Ovary (tissue), 10 donors: ENCODE measurements at regions of chr1 and their contacts with region 1.

Region 1: DNA sequence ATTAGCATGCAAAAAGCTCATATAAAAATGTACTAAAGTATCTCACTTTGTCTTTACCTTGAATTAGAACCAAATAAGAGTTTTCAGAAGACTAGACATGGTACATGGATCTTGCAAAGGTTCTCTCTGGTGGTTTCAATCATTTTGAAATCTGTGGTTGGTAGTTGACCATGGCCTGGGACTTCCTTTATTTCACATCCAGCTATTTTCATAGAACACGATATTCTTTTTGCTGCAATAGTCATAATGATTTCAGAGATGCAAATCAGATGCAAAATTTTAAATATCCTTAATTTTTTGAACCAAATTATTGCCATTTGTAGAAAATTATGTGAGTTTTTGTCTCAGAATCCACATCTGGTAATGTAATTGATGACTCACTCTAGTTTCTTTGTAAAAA is 375.1 kb upstream of the ZP4 start:
- DNase-seq: no peak
- H3K4me3 ChIP-seq: no peak overlapping the region
- H3K27ac ChIP-seq: no peak overlapping the region
- H3K4me1 ChIP-seq: no peaks in the 10 kb centered on the region
- H3K27me3 ChIP-seq: no peaks in the 10 kb centered on the region
- CTCF ChIP-seq: no peak
- EP300 ChIP-seq: no peak
- POLR2A ChIP-seq: no peak

Region 2: DNA sequence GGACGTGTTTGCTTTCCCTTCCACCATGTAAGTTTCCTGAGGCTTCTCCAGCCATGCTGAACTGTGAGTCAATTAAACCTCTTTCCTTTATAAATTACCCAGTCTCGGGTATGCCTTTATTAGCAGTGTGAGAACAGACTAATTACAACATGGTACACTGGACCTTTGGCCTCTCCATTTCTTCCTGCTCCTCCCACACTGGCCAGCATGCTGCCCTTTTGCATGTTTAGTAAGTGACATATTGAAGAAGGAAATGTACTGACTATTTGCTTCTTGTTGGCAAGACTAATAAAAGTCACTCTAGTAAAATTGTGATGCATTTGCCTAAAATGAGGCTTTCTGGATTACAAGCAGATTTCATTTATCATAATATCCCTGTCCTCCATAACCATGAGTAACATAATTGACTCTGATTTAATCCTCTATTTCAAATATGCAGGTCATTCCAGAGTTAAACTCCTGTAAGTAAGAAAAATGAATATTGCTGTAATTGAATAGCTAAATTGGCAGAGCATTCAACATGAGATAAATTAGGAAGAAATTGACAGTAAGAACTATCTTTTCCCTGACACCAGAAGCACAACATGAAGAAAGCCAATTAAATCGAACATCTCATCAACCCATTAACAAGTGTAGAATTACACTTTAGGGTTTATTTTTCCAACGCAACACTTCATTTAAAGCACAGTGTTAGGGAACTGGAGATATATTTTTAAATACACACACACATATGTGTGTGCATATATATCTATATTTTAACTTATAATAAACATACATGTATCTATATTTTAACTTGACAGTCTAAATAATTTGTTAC is 52.6 kb after region 1 on chr1:
- intact Hi-C with region 1: loop called in 1 of 4 experiments (anchors 10 kb)
- DNase-seq: no peak
- H3K4me3 ChIP-seq: no peak overlapping the region
- H3K27ac ChIP-seq: no peak overlapping the region
- H3K4me1 ChIP-seq: no peaks in the 10 kb centered on the region
- H3K27me3 ChIP-seq: no peaks in the 10 kb centered on the region
- CTCF ChIP-seq: no peak
- EP300 ChIP-seq: no peak
- POLR2A ChIP-seq: no peak